ENCODE measurements at regions of chr15 and their contacts with region 1.

Region 1: GRCh38 chr15:69194025-69194827 is 33.8 kb downstream of the GLCE start:
- DNase-seq: no peak
- ATAC-seq: no peak
- H3K4me3 ChIP-seq: no peak overlapping the region
- H3K4me3 Mint-ChIP-seq: no peak overlapping the region
- H3K27ac ChIP-seq: no peak overlapping the region
- H3K27ac Mint-ChIP-seq: no peak overlapping the region
- H3K4me1 ChIP-seq: no peaks in the 10 kb centered on the region
- H3K4me1 Mint-ChIP-seq: peaks cover 7% of the 10 kb centered on the region
- H3K27me3 ChIP-seq: no peaks in the 10 kb centered on the region
- H3K27me3 Mint-ChIP-seq: no peaks in the 10 kb centered on the region
- CTCF ChIP-seq: no peak

Region 2: GRCh38 chr15:69141286-69141701 is 52.9 kb before region 1 on chr15:
- CTCF ChIA-PET with region 1: no interaction called
- POLR2A ChIA-PET with region 1: no interaction called
- intact Hi-C with region 1: loop called in 1 of 2 experiments (anchors 5 kb)
- DNase-seq: no peak
- ATAC-seq: no peak
- H3K4me3 ChIP-seq: no peak overlapping the region
- H3K4me3 Mint-ChIP-seq: no peak overlapping the region
- H3K27ac ChIP-seq: no peak overlapping the region
- H3K27ac Mint-ChIP-seq: no peak overlapping the region
- H3K4me1 ChIP-seq: no peaks in the 10 kb centered on the region
- H3K4me1 Mint-ChIP-seq: no peaks in the 10 kb centered on the region
- H3K27me3 ChIP-seq: no peaks in the 10 kb centered on the region
- H3K27me3 Mint-ChIP-seq: peaks cover 43% of the 10 kb centered on the region
- CTCF ChIP-seq: no peak

Measured in CD8-positive, alpha-beta T cell (primary cell).